ENCODE measurements at regions of chr10 and their contacts with region 1.

Region 1: GRCh38 chr10:103759100-103759781 is 96.1 kb downstream of the SH3PXD2A start:
- DNase-seq: peak; percentile 49
- H3K4me3 Mint-ChIP-seq: peak overlapping the region; percentile 69
- H3K27ac Mint-ChIP-seq: peak overlapping the region; percentile 92
- H3K4me1 Mint-ChIP-seq: peaks cover 66% of the 10 kb centered on the region
- H3K27me3 Mint-ChIP-seq: peaks cover 8% of the 10 kb centered on the region

Region 2: DNA sequence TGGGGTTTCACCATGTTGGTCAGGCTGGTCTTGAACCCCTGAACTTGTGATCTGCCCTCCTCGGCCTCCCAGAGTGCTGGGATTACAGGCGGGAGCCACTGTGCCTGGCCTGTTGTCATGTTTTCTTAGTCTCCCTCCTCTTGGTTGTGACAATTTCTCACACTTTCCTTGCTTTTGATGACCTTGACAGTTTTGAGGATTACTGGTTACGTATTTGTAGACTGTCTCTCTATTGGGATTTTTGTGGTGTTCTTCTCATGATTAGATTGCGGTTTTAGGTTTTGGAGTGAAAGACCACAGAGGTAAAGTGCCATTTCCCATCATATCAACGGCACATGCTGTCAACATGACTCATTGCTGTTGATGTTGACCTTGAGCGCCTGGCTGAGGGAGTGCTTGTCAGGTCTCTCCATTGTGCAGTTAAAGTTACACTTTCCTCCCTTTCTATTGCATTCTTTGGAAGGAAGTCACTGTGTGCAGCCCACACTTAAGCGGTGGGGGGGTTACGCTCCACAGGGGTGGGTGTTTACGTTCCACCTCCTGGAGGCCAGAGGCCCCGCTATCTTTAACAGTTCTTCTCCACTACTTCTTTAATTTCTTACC is 255.0 kb before region 1 on chr10:
- intact Hi-C with region 1: loop called (anchors 2 kb)
- DNase-seq: peak; percentile 56
- H3K4me3 Mint-ChIP-seq: peak overlapping the region; percentile 40
- H3K27ac Mint-ChIP-seq: peak overlapping the region; percentile 77
- H3K4me1 Mint-ChIP-seq: peaks cover 53% of the 10 kb centered on the region
- H3K27me3 Mint-ChIP-seq: peaks cover 36% of the 10 kb centered on the region

Region 3: DNA sequence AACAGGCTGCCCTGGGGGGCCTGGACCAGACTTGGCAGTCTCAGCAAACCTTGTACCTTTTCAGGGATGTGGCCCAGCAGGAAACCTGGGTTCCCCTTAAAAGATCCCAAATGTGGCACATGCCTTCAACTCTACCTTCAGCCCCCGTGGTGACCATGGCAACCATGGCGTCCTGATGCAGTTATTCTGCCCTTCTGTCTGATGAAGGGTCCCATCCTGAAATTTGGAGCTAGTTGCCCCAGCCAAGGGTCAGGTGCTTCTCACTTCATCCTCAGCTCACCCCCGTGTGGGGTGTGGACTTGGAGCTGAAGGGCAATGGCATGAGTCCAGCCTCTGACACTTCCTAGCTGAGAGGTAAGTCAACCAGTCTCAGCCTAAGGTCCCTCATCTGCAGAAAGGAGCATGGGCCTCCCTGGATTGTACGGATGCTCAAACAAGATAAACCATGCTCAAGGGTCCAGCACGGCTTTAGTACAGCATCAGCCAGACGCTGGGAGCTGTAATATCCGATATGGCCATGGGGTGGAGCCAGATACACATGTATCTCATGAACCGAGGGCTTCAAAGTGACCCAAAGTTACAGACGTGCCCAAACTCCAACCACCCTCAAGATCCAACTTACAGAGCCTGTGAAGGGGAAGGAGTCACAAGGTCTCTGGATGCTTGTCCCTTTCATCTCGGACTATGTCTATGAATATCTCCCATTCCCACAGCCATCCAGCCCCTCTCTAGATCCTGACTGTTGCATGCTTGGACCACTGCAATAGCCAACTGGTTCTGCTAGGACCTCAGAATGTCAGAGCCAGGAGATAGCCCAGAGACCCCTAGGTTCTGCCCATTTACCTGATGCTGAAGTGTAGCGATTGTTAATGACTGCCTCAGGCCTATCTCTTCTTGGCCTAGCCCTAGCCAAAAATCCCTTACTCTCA is 46.4 kb before region 1 on chr10:
- intact Hi-C with region 1: loop called (anchors 2 kb)
- DNase-seq: peak; percentile 73
- H3K4me3 Mint-ChIP-seq: no peak overlapping the region
- H3K27ac Mint-ChIP-seq: no peak overlapping the region
- H3K4me1 Mint-ChIP-seq: peaks cover 10% of the 10 kb centered on the region
- H3K27me3 Mint-ChIP-seq: peaks cover 5% of the 10 kb centered on the region

Region 4: GRCh38 chr10:103772096-103772845 is 13.0 kb after region 1 on chr10:
- intact Hi-C with region 1: loop called (anchors 1 kb)
- DNase-seq: peak; percentile 60
- H3K4me3 Mint-ChIP-seq: peak overlapping the region; percentile 87
- H3K27ac Mint-ChIP-seq: peak overlapping the region; percentile 83
- H3K4me1 Mint-ChIP-seq: peaks cover 34% of the 10 kb centered on the region
- H3K27me3 Mint-ChIP-seq: peaks cover 6% of the 10 kb centered on the region

Region 5: DNA sequence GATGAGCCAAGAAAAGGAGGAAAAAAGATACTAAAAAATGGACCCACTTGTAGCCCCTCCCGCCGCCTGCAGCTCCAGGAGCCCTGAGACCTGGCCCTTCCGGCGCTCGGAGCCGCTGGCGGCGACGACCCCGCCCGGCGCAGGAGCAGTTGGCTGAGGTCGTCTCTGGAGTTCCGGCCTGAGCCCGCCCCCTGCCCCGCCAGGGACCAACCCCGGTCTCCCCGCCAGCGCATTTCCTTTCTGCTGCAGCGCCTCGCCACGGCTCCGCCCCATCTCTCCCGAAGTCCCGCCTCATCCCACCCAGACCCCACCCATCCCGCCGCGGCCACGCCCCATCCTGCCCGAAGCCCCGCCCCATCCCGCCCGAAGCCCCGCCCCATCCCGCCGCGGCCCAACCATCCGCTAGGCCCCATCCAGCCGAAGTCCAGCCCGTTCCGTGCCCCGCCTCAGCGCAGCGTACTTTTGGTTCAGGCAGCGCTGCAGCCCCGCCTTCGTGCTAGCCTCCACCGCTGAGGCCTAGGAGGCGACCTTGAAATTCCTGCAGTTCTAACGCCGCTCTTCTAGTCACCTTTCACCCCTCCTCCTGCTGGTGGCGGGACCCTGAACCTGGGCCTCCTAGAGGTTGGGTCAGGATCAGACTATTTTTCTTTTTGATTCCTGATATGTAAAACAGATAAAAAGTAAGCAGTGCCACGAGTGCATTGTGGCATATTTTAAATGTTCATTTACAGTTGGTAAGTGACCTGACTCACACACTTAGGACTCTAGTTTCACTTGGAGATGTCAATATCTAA is 159.0 kb after region 1 on chr10 and contains the start of gene STN1:
- intact Hi-C with region 1: loop called (anchors 5 kb)
- DNase-seq: peak; percentile 94
- H3K4me3 Mint-ChIP-seq: peak within 1 kb of the TSS; percentile 93
- H3K27ac Mint-ChIP-seq: peak within 1 kb of the TSS; percentile 94
- H3K4me1 Mint-ChIP-seq: peaks cover 36% of the 10 kb centered on the region
- H3K27me3 Mint-ChIP-seq: no peaks in the 10 kb centered on the region
- total RNA-seq, gene STN1: 19.4 and 20.0 TPM in 2 replicates

Region 6: DNA sequence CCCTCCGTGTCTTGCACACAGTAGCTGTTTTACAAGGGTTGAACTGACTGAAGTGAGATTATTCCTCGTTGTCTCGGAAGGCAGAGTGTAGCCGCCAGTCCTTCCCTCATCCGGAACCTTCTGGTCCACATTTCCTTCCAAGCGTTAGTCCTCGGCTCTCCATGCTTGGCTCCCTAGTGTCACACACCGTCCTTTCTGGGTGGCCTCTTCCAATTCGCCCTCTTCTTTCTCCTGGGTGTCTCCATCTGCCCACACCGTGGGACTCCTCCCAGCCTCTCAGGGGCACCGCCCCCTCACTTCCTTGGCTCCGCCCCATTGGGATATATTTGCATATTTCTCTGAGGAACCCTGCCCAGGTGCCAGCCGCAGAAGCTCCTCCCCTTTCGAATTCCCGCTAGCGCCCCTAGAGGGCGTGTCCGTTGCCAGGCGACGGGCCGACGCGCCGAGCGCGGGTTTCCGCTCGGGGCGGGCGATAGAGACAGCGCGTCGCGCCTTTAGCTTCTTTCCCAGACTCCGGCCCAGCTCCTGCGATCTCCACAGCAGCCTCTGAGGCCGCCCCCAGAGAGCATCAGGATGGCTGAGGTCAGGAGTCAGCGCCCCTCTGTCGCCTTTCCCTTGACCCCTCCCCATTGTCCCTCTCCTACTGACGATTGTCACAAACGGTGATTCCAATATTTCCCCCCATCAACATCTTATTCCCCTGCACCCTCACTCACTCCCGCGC is 594.2 kb after region 1 on chr10 and contains the start of gene CFAP58:
- intact Hi-C with region 1: loop called (anchors 5 kb)
- DNase-seq: peak; percentile 89
- H3K4me3 Mint-ChIP-seq: no peak within 1 kb of the TSS
- H3K27ac Mint-ChIP-seq: peak within 1 kb of the TSS; percentile 67
- H3K4me1 Mint-ChIP-seq: no peaks in the 10 kb centered on the region
- H3K27me3 Mint-ChIP-seq: peaks cover 2% of the 10 kb centered on the region
- total RNA-seq, gene CFAP58: 0.08 and 0.24 TPM in 2 replicates